ENCODE measurements at regions of chr3 and their contacts with region 1.

Region 1: GRCh38 chr3:46663591-46664135 is 29.8 kb downstream of the ALS2CL start:
- DNase-seq: peak; percentile 30
- H3K4me3 Mint-ChIP-seq: no peak overlapping the region
- H3K27ac Mint-ChIP-seq: no peak overlapping the region
- H3K4me1 Mint-ChIP-seq: peaks cover 33% of the 10 kb centered on the region
- H3K27me3 Mint-ChIP-seq: no peaks in the 10 kb centered on the region
- CTCF ChIP-seq: peak; percentile 19

Region 2: DNA sequence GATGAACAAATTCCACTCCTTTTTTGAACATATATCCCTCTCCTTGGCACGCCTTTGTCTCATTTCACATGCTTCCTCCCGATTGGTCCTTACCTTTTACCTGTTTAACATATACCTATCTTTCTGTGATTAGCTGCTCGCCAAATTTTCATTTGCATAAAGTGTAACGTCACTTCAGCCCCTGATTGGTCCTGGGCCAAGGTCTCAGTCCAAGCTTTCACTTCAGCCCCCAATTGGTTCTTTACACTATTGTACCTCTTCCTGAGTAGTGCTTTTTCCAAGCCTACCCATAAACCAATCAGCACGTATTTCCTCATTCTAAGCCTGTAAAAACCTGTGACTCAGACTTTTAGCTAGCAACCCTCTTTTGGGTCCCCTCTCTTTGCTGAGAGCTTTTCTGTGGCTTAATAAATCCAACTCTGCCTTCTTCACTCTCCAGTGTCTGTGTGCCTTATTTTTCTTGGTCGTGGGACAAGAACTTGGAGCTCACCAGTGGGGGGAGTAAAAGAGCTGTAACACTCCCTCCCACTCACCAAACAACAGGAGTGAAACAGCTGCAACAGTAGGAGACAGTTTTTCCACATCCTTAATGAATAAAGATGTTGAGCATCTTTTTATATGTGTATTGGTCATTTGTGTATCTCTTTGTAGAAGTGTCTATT is 635.8 kb before region 1 on chr3:
- CTCF ChIA-PET with region 1: no interaction called
- POLR2A ChIA-PET with region 1: no interaction called
- intact Hi-C with region 1: no loop called
- DNase-seq: no peak
- H3K4me3 Mint-ChIP-seq: no peak overlapping the region
- H3K27ac Mint-ChIP-seq: no peak overlapping the region
- H3K4me1 Mint-ChIP-seq: no peaks in the 10 kb centered on the region
- H3K27me3 Mint-ChIP-seq: no peaks in the 10 kb centered on the region
- CTCF ChIP-seq: no peak

Region 3: GRCh38 chr3:46674031-46674845 is 10.6 kb after region 1 on chr3:
- CTCF ChIA-PET with region 1: interaction called, 9 read pairs
- POLR2A ChIA-PET with region 1: interaction called, 19 read pairs
- intact Hi-C with region 1: no loop called
- DNase-seq: no peak
- H3K4me3 Mint-ChIP-seq: no peak overlapping the region
- H3K27ac Mint-ChIP-seq: no peak overlapping the region
- H3K4me1 Mint-ChIP-seq: no peaks in the 10 kb centered on the region
- H3K27me3 Mint-ChIP-seq: no peaks in the 10 kb centered on the region
- CTCF ChIP-seq: peak; percentile 11

Region 4: DNA sequence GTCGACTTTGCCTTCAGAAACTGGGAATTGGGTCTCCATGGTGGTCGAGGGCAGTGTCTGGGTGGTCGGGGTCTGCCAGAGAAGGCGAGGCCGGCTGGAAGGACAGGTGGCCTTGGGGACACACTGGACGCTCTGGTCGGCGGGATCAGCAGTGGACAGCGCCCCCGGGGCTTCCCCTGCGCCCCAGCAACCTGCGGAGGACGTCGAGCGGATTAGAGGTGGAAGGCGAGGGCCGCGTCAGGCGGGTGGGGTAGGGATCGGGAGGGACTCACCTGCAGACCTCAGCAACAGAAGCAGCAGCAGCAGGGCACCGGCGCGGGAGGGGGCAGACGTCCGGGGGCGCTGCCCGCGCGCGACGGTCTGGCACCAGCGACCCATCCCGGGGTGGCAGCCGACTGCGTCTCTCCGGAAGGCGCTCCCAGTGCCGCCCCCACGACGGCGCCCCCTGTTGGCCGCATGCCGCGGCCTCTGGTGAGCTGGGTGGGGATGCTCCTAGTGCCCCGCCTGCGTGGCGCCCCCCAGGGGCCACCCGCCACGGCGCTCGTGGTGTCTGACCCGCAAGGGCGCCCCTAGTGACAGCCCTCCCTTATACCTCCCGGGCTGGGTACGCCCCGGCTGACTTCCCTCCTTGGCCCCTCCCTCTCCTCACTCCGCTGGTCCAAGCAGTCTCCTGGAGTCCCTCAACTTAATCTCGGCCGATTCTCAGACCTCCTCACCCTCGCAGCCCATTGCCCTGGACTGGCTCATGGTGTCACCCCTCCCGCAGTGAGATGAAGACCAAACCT is 54.0 kb after region 1 on chr3 and contains the start of gene PRSS50:
- CTCF ChIA-PET with region 1: no interaction called
- POLR2A ChIA-PET with region 1: no interaction called
- intact Hi-C with region 1: no loop called
- DNase-seq: no peak
- H3K4me3 Mint-ChIP-seq: no peak within 1 kb of the TSS
- H3K27ac Mint-ChIP-seq: no peak within 1 kb of the TSS
- H3K4me1 Mint-ChIP-seq: no peaks in the 10 kb centered on the region
- H3K27me3 Mint-ChIP-seq: peaks cover 15% of the 10 kb centered on the region
- CTCF ChIP-seq: peak; percentile 34
- total RNA-seq, gene PRSS50: not detected in 2 replicates

Measured in MCF 10A (cell line).